ENCODE measurements at regions of chr9 and their contacts with region 1.

Region 1: GRCh38 chr9:81689343-81690190 is at the start of gene TLE1:
- DNase-seq: peak; percentile 100
- ATAC-seq: peak; percentile 90
- H3K4me3 ChIP-seq: peak within 1 kb of the TSS; percentile 98
- H3K27ac ChIP-seq: peak within 1 kb of the TSS; percentile 87
- H3K4me1 ChIP-seq: peaks cover 10% of the 10 kb centered on the region
- H3K27me3 ChIP-seq: no peaks in the 10 kb centered on the region
- CTCF ChIP-seq: no peak
- POLR2A ChIP-seq: peak; percentile 59
- RAD21 ChIP-seq: peak; percentile 36
- total RNA-seq, gene TLE1: 36.0 and 40.3 TPM in 2 replicates

Region 2: GRCh38 chr9:80797831-80798688 is 891.5 kb before region 1 on chr9:
- CTCF ChIA-PET with region 1: no interaction called
- POLR2A ChIA-PET with region 1: no interaction called
- dilution Hi-C with region 1: no loop called
- in situ Hi-C with region 1: no loop called
- intact Hi-C with region 1: loop called (anchors 5 kb)
- DNase-seq: peak; percentile 63
- ATAC-seq: peak; percentile 62
- H3K4me3 ChIP-seq: no peak overlapping the region
- H3K27ac ChIP-seq: no peak overlapping the region; the same call in 1 of the 2 replicates
- H3K4me1 ChIP-seq: no peaks in the 10 kb centered on the region; the same call in 1 of the 2 replicates
- H3K27me3 ChIP-seq: no peaks in the 10 kb centered on the region
- CTCF ChIP-seq: no peak
- POLR2A ChIP-seq: no peak
- RAD21 ChIP-seq: no peak

Region 3: GRCh38 chr9:81182431-81182830 is 507.1 kb before region 1 on chr9:
- CTCF ChIA-PET with region 1: no interaction called
- POLR2A ChIA-PET with region 1: no interaction called
- dilution Hi-C with region 1: no loop called
- in situ Hi-C with region 1: no loop called
- intact Hi-C with region 1: loop called (anchors 10 kb)
- DNase-seq: peak; percentile 77
- ATAC-seq: peak; percentile 87
- H3K4me3 ChIP-seq: no peak overlapping the region
- H3K27ac ChIP-seq: no peak overlapping the region
- H3K4me1 ChIP-seq: peaks cover 3% of the 10 kb centered on the region
- H3K27me3 ChIP-seq: peaks cover 2% of the 10 kb centered on the region; the same call in 1 of the 2 replicates
- CTCF ChIP-seq: no peak
- POLR2A ChIP-seq: no peak
- RAD21 ChIP-seq: no peak

Region 4: DNA sequence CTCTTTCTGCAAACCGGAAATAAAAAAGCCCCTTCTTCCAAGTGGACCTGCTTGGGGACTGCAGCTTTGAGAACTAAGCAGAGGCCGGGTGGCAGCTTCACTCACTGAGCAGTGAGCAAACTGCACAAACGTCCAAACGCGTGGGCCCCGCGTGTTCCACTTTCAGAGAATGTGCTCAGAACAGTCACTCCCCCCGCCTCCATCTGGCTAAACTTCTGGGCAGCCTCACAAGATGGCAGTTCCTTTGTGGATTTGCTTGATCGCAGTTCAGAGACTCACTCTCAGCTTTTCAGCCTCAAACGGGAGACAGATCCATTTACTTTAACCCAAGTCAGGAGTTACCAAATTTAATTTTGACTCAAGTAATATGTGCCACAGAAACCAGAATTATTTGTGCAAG is 216.9 kb before region 1 on chr9:
- CTCF ChIA-PET with region 1: interaction called, 11 read pairs
- POLR2A ChIA-PET with region 1: no interaction called
- dilution Hi-C with region 1: no loop called
- in situ Hi-C with region 1: no loop called
- intact Hi-C with region 1: no loop called
- DNase-seq: no peak
- ATAC-seq: no peak
- H3K4me3 ChIP-seq: no peak overlapping the region
- H3K27ac ChIP-seq: no peak overlapping the region
- H3K4me1 ChIP-seq: peaks cover 11% of the 10 kb centered on the region
- H3K27me3 ChIP-seq: no peaks in the 10 kb centered on the region
- CTCF ChIP-seq: no peak
- POLR2A ChIP-seq: no peak
- RAD21 ChIP-seq: no peak

Region 5: DNA sequence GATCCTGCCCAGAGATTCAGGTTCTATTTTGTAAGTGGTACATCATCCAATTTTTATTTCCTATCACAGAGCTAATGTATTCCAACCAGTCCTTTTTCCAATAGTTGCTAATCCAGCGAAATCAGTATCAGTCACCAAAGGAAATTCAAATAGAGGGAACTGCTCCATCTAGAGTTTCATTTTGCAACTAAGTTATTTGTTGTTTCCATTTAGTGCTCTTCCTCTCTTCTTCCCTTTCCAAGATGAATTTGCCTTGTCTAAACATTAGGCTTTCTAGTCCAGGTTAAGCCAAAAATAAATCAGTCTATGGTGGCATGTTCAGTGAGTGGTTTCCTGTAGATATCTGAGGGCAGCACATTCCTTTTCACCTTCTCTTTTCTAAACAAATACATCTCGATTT is 158.9 kb after region 1 on chr9:
- CTCF ChIA-PET with region 1: no interaction called
- POLR2A ChIA-PET with region 1: no interaction called
- dilution Hi-C with region 1: no loop called
- in situ Hi-C with region 1: no loop called
- intact Hi-C with region 1: loop called (anchors 1 kb)
- DNase-seq: peak; percentile 66
- ATAC-seq: peak; percentile 75
- H3K4me3 ChIP-seq: no peak overlapping the region
- H3K27ac ChIP-seq: no peak overlapping the region
- H3K4me1 ChIP-seq: no peaks in the 10 kb centered on the region; the same call in 1 of the 2 replicates
- H3K27me3 ChIP-seq: no peaks in the 10 kb centered on the region
- CTCF ChIP-seq: peak; percentile 63
- POLR2A ChIP-seq: no peak
- RAD21 ChIP-seq: peak; percentile 60

Region 6: DNA sequence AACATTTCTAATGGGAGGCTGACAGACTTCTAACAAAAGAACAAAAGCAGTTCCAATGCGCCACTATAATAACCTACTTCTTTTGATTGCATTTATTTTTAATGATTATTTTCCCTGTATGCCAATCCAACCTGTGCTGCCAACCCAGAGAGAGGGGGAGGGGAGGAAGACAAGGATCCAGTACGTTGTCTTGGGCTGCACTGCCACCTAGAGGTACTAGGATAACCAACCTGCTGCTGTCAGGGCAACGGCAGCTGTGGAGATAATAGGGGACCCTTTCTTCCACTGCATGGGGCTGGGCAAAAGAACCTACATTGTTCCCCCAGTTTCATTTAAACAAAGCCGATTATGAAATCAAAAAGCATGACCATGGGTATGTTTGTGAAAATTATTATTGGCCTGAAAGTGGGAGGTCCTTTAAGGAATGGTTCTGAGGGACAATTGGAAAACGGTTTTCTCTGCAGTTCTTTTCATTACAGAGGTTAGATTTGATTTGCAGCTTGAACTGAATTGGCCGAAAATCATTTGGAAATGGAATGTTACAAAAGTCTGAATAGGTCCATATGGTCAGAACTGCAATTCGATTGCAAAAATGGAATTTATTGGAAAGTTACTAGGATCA is 1272.0 kb after region 1 on chr9:
- CTCF ChIA-PET with region 1: no interaction called
- POLR2A ChIA-PET with region 1: no interaction called
- dilution Hi-C with region 1: no loop called
- in situ Hi-C with region 1: no loop called
- intact Hi-C with region 1: loop called (anchors 10 kb)
- DNase-seq: peak; percentile 70
- ATAC-seq: peak; percentile 96
- H3K4me3 ChIP-seq: no peak overlapping the region
- H3K27ac ChIP-seq: no peak overlapping the region
- H3K4me1 ChIP-seq: no peaks in the 10 kb centered on the region
- H3K27me3 ChIP-seq: peaks cover 4% of the 10 kb centered on the region; the same call in 1 of the 2 replicates
- CTCF ChIP-seq: peak; percentile 89
- POLR2A ChIP-seq: no peak
- RAD21 ChIP-seq: peak; percentile 88

Measured in IMR-90 (cell line).